Activated T-helper 1 cell treated with anti-CD3 and anti-CD28 coated beads, Interleukin-12 subunit alpha, Interleukin-12 subunit beta, Interleukin-2, Interleukin-4 antibody, amounts not matched to agents 30 ng/mL and 10 ng/mL and 1 ng/mL, durations not matched to agents 14 hours and 24 hours and 36 hours (primary cell): ENCODE measurements at regions of chr1 and their contacts with region 1.

Region 1: GRCh38 chr1:211183747-211184313 is 49.9 kb upstream of the KCNH1 start:
- DNase-seq: no peak
- H3K4me3 Mint-ChIP-seq: no peak overlapping the region
- H3K27ac Mint-ChIP-seq: no peak overlapping the region
- H3K4me1 Mint-ChIP-seq: no peaks in the 10 kb centered on the region
- H3K27me3 Mint-ChIP-seq: peaks cover 11% of the 10 kb centered on the region

Region 2: DNA sequence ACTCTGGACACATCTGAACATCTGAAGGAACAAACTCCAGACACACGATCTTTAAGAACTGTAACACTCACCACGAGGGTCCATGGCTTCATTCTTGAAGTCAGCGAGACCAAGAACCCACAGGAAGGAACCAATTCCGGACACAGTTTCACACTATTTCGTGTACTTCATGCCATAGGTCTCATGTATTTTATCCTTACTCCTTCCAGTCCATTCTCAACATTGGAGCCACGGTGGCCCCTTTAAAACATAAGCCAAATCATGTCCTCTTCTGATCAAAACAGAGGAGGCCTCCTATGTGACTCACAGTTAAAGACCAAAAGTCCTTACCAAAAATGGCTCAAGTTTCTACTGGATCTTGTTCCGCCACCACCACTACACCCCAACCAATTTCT is 45.5 kb after region 1 on chr1:
- intact Hi-C with region 1: loop called (anchors 2 kb)
- DNase-seq: no peak
- H3K4me3 Mint-ChIP-seq: peak overlapping the region; percentile 51
- H3K27ac Mint-ChIP-seq: peak overlapping the region; percentile 63
- H3K4me1 Mint-ChIP-seq: peaks cover 26% of the 10 kb centered on the region
- H3K27me3 Mint-ChIP-seq: peaks cover 3% of the 10 kb centered on the region

Region 3: GRCh38 chr1:211589782-211590721 is 406.2 kb after region 1 on chr1:
- intact Hi-C with region 1: no loop called
- DNase-seq: no peak
- H3K4me3 Mint-ChIP-seq: no peak overlapping the region
- H3K27ac Mint-ChIP-seq: no peak overlapping the region
- H3K4me1 Mint-ChIP-seq: peaks cover 14% of the 10 kb centered on the region
- H3K27me3 Mint-ChIP-seq: peaks cover 6% of the 10 kb centered on the region